Right lobe of liver (tissue), 6 donors: ENCODE measurements at regions of chr10 and their contacts with region 1.

Region 1: GRCh38 chr10:78029269-78030226 is at the start of gene POLR3A:
- DNase-seq: peak; percentile 94 to 95 (median 95)
- ATAC-seq: peak; percentile 76 to 81 (median 78)
- H3K4me3 ChIP-seq: peak within 1 kb of the TSS; percentile 88 to 97 (median 96)
- H3K27ac ChIP-seq: peak within 1 kb of the TSS; percentile 42 to 72 (median 67)
- H3K4me1 ChIP-seq: peaks cover 0 to 15% (median 5%) of the 10 kb centered on the region in 4 donors
- H3K27me3 ChIP-seq: no peaks in the 10 kb centered on the region
- CTCF ChIP-seq: peak; percentile 58 to 76 (median 64)
- POLR2A ChIP-seq: no peak
- total RNA-seq, gene POLR3A: 5.5 to 8.5 (median 6.4) TPM

Region 2: DNA sequence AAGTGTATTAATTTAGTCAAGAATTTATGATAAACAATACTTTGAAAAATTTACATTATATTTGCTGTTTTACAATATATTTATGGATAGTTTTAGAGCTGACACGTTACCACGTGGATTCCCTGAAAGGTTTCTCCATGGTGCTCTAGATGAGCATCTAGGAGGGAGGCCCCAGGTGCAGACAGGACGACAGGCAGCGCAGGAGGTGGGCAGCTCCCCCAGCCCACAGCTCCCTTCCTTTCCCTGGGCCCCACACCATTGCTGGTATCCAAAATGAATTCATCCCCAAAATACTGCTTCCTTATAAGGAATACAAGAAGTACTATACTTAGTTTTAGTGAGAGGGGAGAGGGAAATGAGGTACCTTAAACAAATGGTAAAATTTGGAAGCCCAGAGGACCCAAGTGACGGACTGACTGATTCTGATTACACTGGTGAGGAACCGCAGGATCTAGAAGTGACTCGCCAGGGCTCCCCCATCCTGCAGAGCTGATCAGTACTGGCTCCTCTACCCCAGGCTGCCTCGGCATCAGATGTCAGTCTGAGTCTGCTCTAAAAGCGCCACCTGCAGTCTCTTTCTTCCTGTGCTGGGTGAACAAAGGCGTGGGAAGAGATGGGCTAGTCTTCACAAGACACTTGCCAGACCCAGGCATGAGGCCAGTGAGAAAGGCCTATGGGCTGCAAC is 192.2 kb before region 1 on chr10:
- intact Hi-C with region 1: loop called in 1 of 2 experiments (anchors 10 kb)
- DNase-seq: no peak
- ATAC-seq: no peak
- H3K4me3 ChIP-seq: no peak overlapping the region
- H3K27ac ChIP-seq: no peak overlapping the region
- H3K4me1 ChIP-seq: no peaks in the 10 kb centered on the region
- H3K27me3 ChIP-seq: no peaks in the 10 kb centered on the region
- CTCF ChIP-seq: no peak
- POLR2A ChIP-seq: no peak

Region 3: GRCh38 chr10:77926566-77927401 is 102.8 kb before region 1 on chr10 and contains the start of gene DLG5:
- intact Hi-C with region 1: no loop called
- DNase-seq: peak; percentile 70 to 81 (median 73)
- ATAC-seq: peak; percentile 83 to 91 (median 85)
- H3K4me3 ChIP-seq: peak within 1 kb of the TSS; percentile 53 to 82 (median 69)
- H3K27ac ChIP-seq: peak within 1 kb of the TSS in 2 of 3 donors; percentile 36 to 40
- H3K4me1 ChIP-seq: peaks cover 0 to 7% (median 0%) of the 10 kb centered on the region in 4 donors
- H3K27me3 ChIP-seq: no peaks in the 10 kb centered on the region
- CTCF ChIP-seq: no peak
- POLR2A ChIP-seq: no peak
- total RNA-seq, gene DLG5: 5.6 to 8.8 (median 7.6) TPM

Region 4: DNA sequence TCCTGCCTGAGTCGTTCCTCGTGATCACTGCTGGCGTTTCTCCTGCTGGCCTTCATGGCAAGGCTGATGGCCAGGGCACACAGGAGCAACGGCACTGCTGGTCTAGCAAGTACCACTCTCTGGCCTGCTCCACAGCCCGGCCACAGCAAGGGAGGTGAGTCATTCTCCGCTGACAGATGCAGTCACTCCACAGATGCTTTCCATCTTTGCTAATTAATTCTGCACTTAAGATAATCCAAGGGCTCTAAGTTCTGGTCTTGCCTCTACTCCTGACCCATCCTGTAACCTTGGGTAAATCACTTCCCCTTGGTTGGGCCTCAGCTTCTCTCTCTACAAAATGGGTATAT is 248.5 kb after region 1 on chr10:
- intact Hi-C with region 1: no loop called
- DNase-seq: no peak
- ATAC-seq: no peak
- H3K4me3 ChIP-seq: no peak overlapping the region
- H3K27ac ChIP-seq: no peak overlapping the region
- H3K4me1 ChIP-seq: no peaks in the 10 kb centered on the region
- H3K27me3 ChIP-seq: no peaks in the 10 kb centered on the region
- CTCF ChIP-seq: no peak
- POLR2A ChIP-seq: no peak